ENCODE measurements at regions of chr4 and their contacts with region 1.

Region 1: GRCh38 chr4:70759627-70760026 is 37.9 kb downstream of the RUFY3 start:
- DNase-seq: no peak
- ATAC-seq: peak in 1 of 4 donors; percentile 44
- H3K4me3 ChIP-seq: peak overlapping the region in 5 of 12 donors; percentile 13 to 43 (median 28)
- H3K27ac ChIP-seq: peak overlapping the region in 3 of 12 donors; percentile 9 to 40 (median 13)
- H3K4me1 ChIP-seq: peaks cover 0 to 27% (median 5%) of the 10 kb centered on the region in 12 donors
- H3K27me3 ChIP-seq: no peaks in the 10 kb centered on the region
- CTCF ChIP-seq: peak in 1 of 12 donors; percentile 17
- POLR2A ChIP-seq: no peak

Region 2: GRCh38 chr4:70721747-70722146 is 37.9 kb before region 1 on chr4 and contains the start of gene RUFY3:
- intact Hi-C with region 1: loop called in 1 of 10 experiments (anchors 1 kb)
- DNase-seq: peak in 4 of 5 donors; percentile 38 to 56 (median 50)
- ATAC-seq: peak; percentile 92 to 96 (median 94)
- H3K4me3 ChIP-seq: peak within 1 kb of the TSS; percentile 11 to 67 (median 54)
- H3K27ac ChIP-seq: peak within 1 kb of the TSS; percentile 16 to 80 (median 70)
- H3K4me1 ChIP-seq: peaks cover 0 to 35% (median 14%) of the 10 kb centered on the region in 12 donors
- H3K27me3 ChIP-seq: no peaks in the 10 kb centered on the region
- CTCF ChIP-seq: no peak
- POLR2A ChIP-seq: no peak
- total RNA-seq, gene RUFY3: 14.6 to 33.0 (median 21.8) TPM